PC-9 (cell line): ENCODE measurements at regions of chr12 and their contacts with region 1.

Region 1: DNA sequence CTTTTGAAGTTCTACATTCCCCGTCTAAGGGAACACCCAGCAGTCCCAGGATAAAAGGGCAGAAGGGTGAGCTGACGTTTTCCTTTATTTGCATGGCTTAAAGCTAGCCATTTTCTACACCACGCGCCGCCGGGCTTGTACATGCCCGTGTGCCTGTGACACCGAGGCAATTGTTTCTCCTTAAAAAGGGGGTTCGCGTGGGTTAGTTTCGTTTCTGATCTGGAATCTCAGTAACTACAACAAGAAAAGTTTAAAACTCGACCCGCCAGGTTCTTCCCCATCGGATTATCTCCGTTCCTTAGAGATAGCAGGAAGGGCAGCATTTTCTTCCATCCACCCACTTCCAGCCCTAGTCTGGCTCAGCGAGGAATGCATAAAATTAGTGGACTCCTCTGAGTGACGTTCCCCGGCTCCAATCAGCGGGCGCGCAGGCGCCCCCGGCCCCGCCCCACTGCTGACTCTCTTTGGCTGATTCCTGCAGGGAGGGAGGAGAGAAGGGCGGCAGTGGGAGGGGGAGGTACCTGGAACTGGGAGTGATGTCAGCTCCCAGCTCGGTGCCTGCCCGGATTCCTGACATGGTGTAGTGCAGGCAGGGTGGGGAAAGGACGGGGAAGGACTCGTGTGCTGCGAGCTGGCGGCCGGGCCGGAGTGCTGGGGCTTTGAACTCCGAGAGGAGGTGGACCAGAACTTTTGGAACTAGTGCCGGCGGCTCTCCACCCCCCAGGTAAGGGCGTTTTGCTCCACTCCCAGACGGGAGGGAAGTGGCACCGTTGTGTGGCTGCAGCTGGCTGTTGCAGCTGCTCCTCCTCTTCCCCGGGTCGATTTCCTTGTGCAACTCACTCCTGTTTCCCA is at the start of gene PPFIBP1:
- DNase-seq: peak; percentile 94 to 98
- H3K4me3 ChIP-seq: peak within 1 kb of the TSS; percentile 96
- H3K27ac ChIP-seq: peak within 1 kb of the TSS; percentile 71
- H3K4me1 ChIP-seq: peaks cover 14% of the 10 kb centered on the region
- H3K27me3 ChIP-seq: no peaks in the 10 kb centered on the region
- CTCF ChIP-seq: no peak; the same call in 1 of the 2 replicates
- total RNA-seq, gene PPFIBP1: 77.0 and 85.0 TPM in 2 replicates

Region 2: GRCh38 chr12:27434673-27435565 is 88.9 kb before region 1 on chr12:
- CTCF ChIA-PET with region 1: interaction called, 4 read pairs
- POLR2A ChIA-PET with region 1: no interaction called
- intact Hi-C with region 1: loop called (anchors 5 kb)
- DNase-seq: peak in 1 of 2 experiments; percentile 8
- H3K4me3 ChIP-seq: no peak overlapping the region
- H3K27ac ChIP-seq: no peak overlapping the region
- H3K4me1 ChIP-seq: 0 out of 2 replicates have a peak, but pooled peaks cover 3% of the 10 kb centered on the region
- H3K27me3 ChIP-seq: no peaks in the 10 kb centered on the region
- CTCF ChIP-seq: peak; percentile 77

Region 3: GRCh38 chr12:27588787-27589186 is 64.9 kb after region 1 on chr12:
- CTCF ChIA-PET with region 1: interaction called, 4 read pairs
- POLR2A ChIA-PET with region 1: no interaction called
- intact Hi-C with region 1: loop called (anchors 1 kb)
- DNase-seq: peak in 1 of 2 experiments; percentile 41
- H3K4me3 ChIP-seq: no peak overlapping the region
- H3K27ac ChIP-seq: no peak overlapping the region
- H3K4me1 ChIP-seq: peaks cover 12% of the 10 kb centered on the region; the same call in 1 of the 2 replicates
- H3K27me3 ChIP-seq: no peaks in the 10 kb centered on the region
- CTCF ChIP-seq: no peak

Region 4: GRCh38 chr12:27627123-27627835 is 103.4 kb after region 1 on chr12:
- CTCF ChIA-PET with region 1: no interaction called
- POLR2A ChIA-PET with region 1: interaction called, 16 read pairs
- intact Hi-C with region 1: no loop called
- DNase-seq: peak in 1 of 2 experiments; percentile 57
- H3K4me3 ChIP-seq: no peak overlapping the region
- H3K27ac ChIP-seq: peak overlapping the region; percentile 42
- H3K4me1 ChIP-seq: peaks cover 23% of the 10 kb centered on the region
- H3K27me3 ChIP-seq: no peaks in the 10 kb centered on the region
- CTCF ChIP-seq: no peak

Region 5: DNA sequence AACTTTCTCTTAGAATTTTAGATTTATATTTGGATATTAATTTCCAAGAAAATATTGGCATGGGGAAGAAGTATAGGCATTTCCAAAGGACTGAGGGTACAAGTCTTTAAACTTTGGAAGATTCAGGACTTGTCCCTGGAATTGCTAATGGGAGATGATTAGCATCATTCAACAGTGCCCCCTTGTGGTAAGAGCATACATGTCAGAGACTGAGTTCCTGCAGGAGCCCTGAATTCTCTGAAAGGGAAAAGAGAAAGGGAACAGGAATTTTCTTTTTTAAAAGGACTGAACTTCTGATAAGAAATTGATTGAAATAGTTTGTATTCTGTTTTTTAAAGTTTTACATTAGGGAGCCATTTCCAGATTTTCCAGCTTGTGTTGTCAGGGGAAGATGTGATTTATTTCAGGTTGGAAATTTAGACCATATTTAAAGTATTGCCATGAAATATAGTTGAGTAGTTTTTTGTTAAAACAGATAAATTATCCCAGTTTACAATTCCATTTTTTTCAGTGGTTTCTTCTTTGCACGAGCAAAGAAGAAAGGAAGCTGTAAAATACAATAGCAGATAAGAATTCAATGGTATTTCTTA is 128.4 kb after region 1 on chr12:
- CTCF ChIA-PET with region 1: no interaction called
- POLR2A ChIA-PET with region 1: no interaction called
- intact Hi-C with region 1: loop called (anchors 1 kb)
- DNase-seq: peak; percentile 42 to 58
- H3K4me3 ChIP-seq: no peak overlapping the region
- H3K27ac ChIP-seq: no peak overlapping the region
- H3K4me1 ChIP-seq: no peaks in the 10 kb centered on the region
- H3K27me3 ChIP-seq: no peaks in the 10 kb centered on the region
- CTCF ChIP-seq: peak; percentile 95